Gastrocnemius medialis (tissue), 4 donors: ENCODE measurements at regions of chr1 and their contacts with region 1.

Region 1: GRCh38 chr1:223845810-223846682 is at the start of gene TP53BP2:
- DNase-seq: peak; percentile 80 to 88
- ATAC-seq: peak; percentile 87 to 89
- H3K4me3 ChIP-seq: peak within 1 kb of the TSS; percentile 78 to 93 (median 89)
- H3K27ac ChIP-seq: peak within 1 kb of the TSS; percentile 94 to 100 (median 98)
- H3K4me1 ChIP-seq: peaks cover 15 to 38% of the 10 kb centered on the region in 2 donors
- H3K27me3 ChIP-seq: no peaks in the 10 kb centered on the region
- CTCF ChIP-seq: peak; percentile 65 to 82 (median 76)
- POLR2A ChIP-seq: peak; percentile 88 to 89
- total RNA-seq, gene TP53BP2: 22.2 to 85.1 (median 38.8) TPM

Region 2: DNA sequence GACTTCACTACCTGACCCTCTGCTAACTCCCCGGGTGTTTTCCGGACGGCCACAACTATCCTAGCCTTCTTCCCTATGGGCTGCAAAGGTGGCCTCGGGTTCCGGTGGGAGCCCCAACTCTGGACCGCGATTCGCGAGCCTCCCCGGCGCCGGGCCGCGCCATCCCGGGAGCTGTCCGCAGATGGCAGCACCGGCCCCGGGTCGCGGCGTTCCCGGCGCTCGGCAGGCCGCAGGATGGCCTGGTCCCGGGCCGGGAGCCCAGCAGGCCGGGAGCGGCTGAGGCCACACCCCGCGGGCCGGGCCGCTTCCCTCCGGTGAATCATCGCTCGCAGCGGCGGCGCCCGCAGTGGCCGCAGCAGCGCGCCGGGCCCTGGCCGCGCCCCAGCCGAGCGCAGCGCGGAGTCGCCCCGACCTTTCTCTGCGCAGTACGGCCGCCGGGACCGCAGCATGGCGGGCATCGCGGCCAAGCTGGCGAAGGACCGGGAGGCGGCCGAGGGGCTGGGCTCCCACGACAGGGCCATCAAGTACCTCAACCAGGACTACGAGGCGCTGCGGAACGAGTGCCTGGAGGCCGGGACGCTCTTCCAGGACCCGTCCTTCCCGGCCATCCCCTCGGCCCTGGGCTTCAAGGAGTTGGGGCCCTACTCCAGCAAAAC is 133.7 kb before region 1 on chr1 and contains the start of gene CAPN2:
- in situ Hi-C with region 1: no loop called
- intact Hi-C with region 1: loop called (anchors 5 kb)
- DNase-seq: peak; percentile 75 to 81
- ATAC-seq: peak; percentile 84 to 85
- H3K4me3 ChIP-seq: peak within 1 kb of the TSS; percentile 69 to 97 (median 90)
- H3K27ac ChIP-seq: peak within 1 kb of the TSS; percentile 84 to 96 (median 96)
- H3K4me1 ChIP-seq: peaks cover 41 to 47% of the 10 kb centered on the region in 2 donors
- H3K27me3 ChIP-seq: no peaks in the 10 kb centered on the region
- CTCF ChIP-seq: peak; percentile 73 to 96 (median 91)
- POLR2A ChIP-seq: peak; percentile 81 to 89
- total RNA-seq, gene CAPN2: 42.6 to 141 (median 89.4) TPM

Region 3: DNA sequence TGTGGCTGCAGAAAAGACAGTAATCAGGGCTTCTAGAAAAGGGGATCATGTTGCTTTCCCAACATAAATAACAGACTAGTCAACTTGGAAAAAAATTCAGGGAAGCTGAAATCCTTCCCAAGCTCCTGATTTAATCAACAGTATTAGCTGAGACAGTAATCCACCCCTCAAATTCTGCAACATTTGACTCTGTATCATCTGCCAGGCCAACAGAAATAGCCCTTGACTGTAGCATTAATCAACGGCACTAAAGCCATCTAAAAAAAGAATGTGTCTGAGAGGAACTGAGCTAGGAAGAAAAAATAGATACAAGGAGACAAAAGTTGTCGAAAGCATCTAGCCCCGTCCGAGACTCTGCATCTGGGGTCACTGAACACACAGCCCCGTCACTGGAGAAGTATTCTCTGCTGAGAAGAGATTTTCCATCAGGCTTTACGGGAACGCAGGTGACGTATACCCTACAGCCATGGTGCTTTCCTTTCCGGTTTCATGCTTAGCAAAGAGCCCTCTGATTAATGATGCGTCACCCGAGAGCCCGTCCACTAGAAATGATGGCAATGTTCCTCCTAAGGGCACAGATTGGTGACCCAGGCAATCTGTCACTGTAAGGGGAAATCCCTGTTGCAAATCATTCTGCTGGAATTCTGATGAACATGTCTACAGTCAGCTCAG is 41.8 kb after region 1 on chr1:
- in situ Hi-C with region 1: no loop called
- intact Hi-C with region 1: loop called (anchors 2 kb)
- DNase-seq: peak; percentile 46 to 67
- ATAC-seq: peak; percentile 93 to 95
- H3K4me3 ChIP-seq: peak overlapping the region; percentile 14 to 48 (median 41)
- H3K27ac ChIP-seq: peak overlapping the region; percentile 73 to 90 (median 84)
- H3K4me1 ChIP-seq: peaks cover 14 to 25% of the 10 kb centered on the region in 2 donors
- H3K27me3 ChIP-seq: no peaks in the 10 kb centered on the region
- CTCF ChIP-seq: no peak
- POLR2A ChIP-seq: no peak

Region 4: DNA sequence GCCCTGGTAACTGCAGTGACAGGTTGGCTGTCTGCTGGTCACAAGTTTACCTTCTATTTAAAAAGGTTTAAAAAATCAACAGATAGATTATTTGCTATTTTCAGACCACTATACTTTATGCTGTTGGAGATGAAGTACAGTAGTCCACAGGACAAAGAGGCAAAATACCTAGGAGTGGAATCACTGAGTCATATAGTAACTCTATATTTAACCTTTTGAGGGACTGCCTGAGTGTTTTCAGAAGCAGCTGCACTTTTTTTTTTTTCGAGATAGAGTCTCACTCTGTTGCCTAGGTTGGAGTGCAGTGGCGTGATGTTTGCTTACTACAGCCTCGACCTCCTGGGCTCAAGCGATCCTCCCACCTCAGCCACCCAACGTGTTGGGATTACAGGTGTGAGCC is 522.4 kb after region 1 on chr1:
- in situ Hi-C with region 1: no loop called
- intact Hi-C with region 1: no loop called
- DNase-seq: no peak
- ATAC-seq: peak; percentile 51 to 53
- H3K4me3 ChIP-seq: no peak overlapping the region
- H3K27ac ChIP-seq: peak overlapping the region in 3 of 4 donors; percentile 24 to 58 (median 44)
- H3K4me1 ChIP-seq: peaks cover 13 to 22% of the 10 kb centered on the region in 2 donors
- H3K27me3 ChIP-seq: no peaks in the 10 kb centered on the region
- CTCF ChIP-seq: no peak
- POLR2A ChIP-seq: no peak